ENCODE measurements at regions of chr6 and their contacts with region 1.

Region 1: GRCh38 chr6:165850434-165851019 is 187.5 kb upstream of the PDE10A start:
- DNase-seq: peak in 4 of 5 donors; percentile 24 to 44 (median 29)
- H3K4me3 ChIP-seq: no peak overlapping the region
- H3K4me3 Mint-ChIP-seq: peak overlapping the region in 3 of 8 donors; percentile 33 to 52 (median 44)
- H3K27ac ChIP-seq: no peak overlapping the region
- H3K27ac Mint-ChIP-seq: no peak overlapping the region
- H3K4me1 ChIP-seq: no peaks in the 10 kb centered on the region
- H3K4me1 Mint-ChIP-seq: peaks cover 4 to 12% (median 6%) of the 10 kb centered on the region in 4 donors
- H3K27me3 ChIP-seq: no peaks in the 10 kb centered on the region
- H3K27me3 Mint-ChIP-seq: peaks cover 39 to 52% of the 10 kb centered on the region in 2 donors

Region 2: DNA sequence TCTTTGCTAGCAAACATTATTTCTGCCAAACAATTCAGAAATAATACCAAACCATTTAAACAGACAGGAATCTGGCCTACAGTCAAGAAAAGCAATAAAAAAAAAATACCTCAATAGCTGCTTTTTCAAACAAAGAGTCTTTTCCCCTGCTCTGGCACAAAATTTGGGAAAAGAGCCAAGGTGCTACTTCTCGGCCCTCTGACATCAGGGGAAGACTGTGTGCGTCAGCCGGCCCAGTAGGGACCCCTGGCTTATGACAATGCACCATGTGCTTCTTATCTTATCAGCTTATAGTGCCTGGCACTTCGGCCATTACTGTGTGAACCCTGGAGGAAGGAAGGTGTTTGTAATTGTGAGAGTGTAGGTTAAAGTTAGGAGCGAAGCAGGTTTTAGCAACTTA is 276.9 kb before region 1 on chr6:
- CTCF ChIA-PET with region 1: no interaction called
- POLR2A ChIA-PET with region 1: no interaction called
- intact Hi-C with region 1: no loop called
- DNase-seq: no peak
- H3K4me3 ChIP-seq: no peak overlapping the region
- H3K4me3 Mint-ChIP-seq: no peak overlapping the region
- H3K27ac ChIP-seq: no peak overlapping the region
- H3K27ac Mint-ChIP-seq: no peak overlapping the region
- H3K4me1 ChIP-seq: no peaks in the 10 kb centered on the region
- H3K4me1 Mint-ChIP-seq: no peaks in the 10 kb centered on the region
- H3K27me3 ChIP-seq: no peaks in the 10 kb centered on the region
- H3K27me3 Mint-ChIP-seq: no peaks in the 10 kb centered on the region

Region 3: DNA sequence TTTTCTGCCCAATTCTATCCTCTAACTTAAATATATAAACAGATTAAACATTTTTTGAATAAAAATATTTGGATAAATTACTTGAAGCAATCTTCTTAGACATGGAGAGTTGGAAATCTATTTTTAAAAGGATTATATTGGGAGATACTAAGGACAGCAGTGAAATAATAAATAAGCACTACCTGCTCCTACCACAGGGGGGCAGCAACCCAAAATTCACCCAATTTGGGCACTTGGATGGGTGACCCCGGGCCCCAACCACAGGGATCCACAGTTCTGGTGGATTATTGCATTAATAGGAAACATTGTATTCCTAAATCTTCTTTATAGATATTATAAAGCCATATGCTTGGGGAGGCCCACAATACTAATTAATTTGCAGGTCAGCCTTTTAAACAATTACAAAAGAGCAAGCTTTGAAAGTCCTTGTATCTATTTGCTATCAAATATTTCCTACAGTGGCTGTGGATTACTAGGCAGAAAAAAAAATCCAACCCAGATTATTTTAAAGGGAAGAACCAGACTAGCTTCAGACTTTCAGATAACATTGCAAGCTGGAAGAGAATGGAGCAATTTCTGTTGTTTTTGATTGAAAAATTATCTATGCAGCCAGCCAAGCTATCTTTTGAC is 121.1 kb before region 1 on chr6:
- CTCF ChIA-PET with region 1: interaction called, 3 read pairs
- POLR2A ChIA-PET with region 1: no interaction called
- intact Hi-C with region 1: loop called (anchors 1 kb)
- DNase-seq: no peak
- H3K4me3 ChIP-seq: no peak overlapping the region
- H3K4me3 Mint-ChIP-seq: no peak overlapping the region
- H3K27ac ChIP-seq: no peak overlapping the region
- H3K27ac Mint-ChIP-seq: no peak overlapping the region
- H3K4me1 ChIP-seq: no peaks in the 10 kb centered on the region
- H3K4me1 Mint-ChIP-seq: peaks cover 0 to 2% (median 0%) of the 10 kb centered on the region in 4 donors
- H3K27me3 ChIP-seq: no peaks in the 10 kb centered on the region
- H3K27me3 Mint-ChIP-seq: peaks cover 5 to 8% of the 10 kb centered on the region in 2 donors

Region 4: GRCh38 chr6:165805067-165805555 is 45.4 kb before region 1 on chr6:
- CTCF ChIA-PET with region 1: no interaction called
- POLR2A ChIA-PET with region 1: no interaction called
- intact Hi-C with region 1: no loop called
- DNase-seq: no peak
- H3K4me3 ChIP-seq: no peak overlapping the region
- H3K4me3 Mint-ChIP-seq: no peak overlapping the region
- H3K27ac ChIP-seq: no peak overlapping the region
- H3K27ac Mint-ChIP-seq: no peak overlapping the region
- H3K4me1 ChIP-seq: no peaks in the 10 kb centered on the region
- H3K4me1 Mint-ChIP-seq: peaks cover 0 to 4% (median 0%) of the 10 kb centered on the region in 4 donors
- H3K27me3 ChIP-seq: no peaks in the 10 kb centered on the region
- H3K27me3 Mint-ChIP-seq: peaks cover 2 to 7% of the 10 kb centered on the region in 2 donors

Region 5: GRCh38 chr6:165834613-165835259 is 15.8 kb before region 1 on chr6:
- CTCF ChIA-PET with region 1: interaction called, 11 read pairs
- POLR2A ChIA-PET with region 1: no interaction called
- intact Hi-C with region 1: no loop called
- DNase-seq: no peak
- H3K4me3 ChIP-seq: no peak overlapping the region
- H3K4me3 Mint-ChIP-seq: no peak overlapping the region
- H3K27ac ChIP-seq: no peak overlapping the region
- H3K27ac Mint-ChIP-seq: no peak overlapping the region
- H3K4me1 ChIP-seq: peaks cover 5% of the 10 kb centered on the region
- H3K4me1 Mint-ChIP-seq: peaks cover 5 to 13% (median 10%) of the 10 kb centered on the region in 4 donors
- H3K27me3 ChIP-seq: no peaks in the 10 kb centered on the region
- H3K27me3 Mint-ChIP-seq: peaks cover 18 to 20% of the 10 kb centered on the region in 2 donors

Region 6: GRCh38 chr6:165861226-165861625 is 10.7 kb after region 1 on chr6:
- CTCF ChIA-PET with region 1: interaction called, 10 read pairs
- POLR2A ChIA-PET with region 1: no interaction called
- intact Hi-C with region 1: no loop called
- DNase-seq: no peak
- H3K4me3 ChIP-seq: no peak overlapping the region
- H3K4me3 Mint-ChIP-seq: no peak overlapping the region
- H3K27ac ChIP-seq: no peak overlapping the region
- H3K27ac Mint-ChIP-seq: no peak overlapping the region
- H3K4me1 ChIP-seq: no peaks in the 10 kb centered on the region
- H3K4me1 Mint-ChIP-seq: no peaks in the 10 kb centered on the region
- H3K27me3 ChIP-seq: no peaks in the 10 kb centered on the region
- H3K27me3 Mint-ChIP-seq: peaks cover 11 to 19% of the 10 kb centered on the region in 2 donors